Activated B cell treated with CpG ODN at 0.5 μM for 24 hours (primary cell): ENCODE measurements at regions of chr6 and their contacts with region 1.

Region 1: GRCh38 chr6:53484476-53485280 is 60.2 kb downstream of the GCLC start:
- DNase-seq: no peak
- ATAC-seq: peak; percentile 66
- H3K4me3 Mint-ChIP-seq: peak overlapping the region; percentile 1
- H3K27ac Mint-ChIP-seq: peak overlapping the region; percentile 79
- H3K4me1 Mint-ChIP-seq: peaks cover 62% of the 10 kb centered on the region
- H3K27me3 Mint-ChIP-seq: peaks cover 3% of the 10 kb centered on the region
- CTCF ChIP-seq: peak; percentile 82

Region 2: DNA sequence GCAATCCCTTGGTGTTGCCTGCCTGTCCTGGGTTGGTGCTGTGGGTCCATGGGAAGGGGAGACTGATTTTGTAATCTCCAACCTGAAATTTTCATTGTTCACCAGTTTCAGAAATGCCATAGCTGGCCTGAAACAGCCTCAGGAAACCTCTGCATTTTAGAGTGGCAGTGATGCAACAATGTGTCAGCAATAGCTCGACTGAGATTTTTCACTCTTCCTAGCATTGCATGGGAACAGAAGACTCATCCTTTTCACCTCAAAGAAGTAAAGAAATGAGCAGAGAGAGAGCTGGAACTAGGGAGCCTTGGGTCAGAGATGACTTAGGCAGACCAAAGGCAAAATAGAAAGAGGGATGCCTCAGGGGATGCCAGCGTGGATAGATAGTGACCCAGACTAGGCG is 837.5 kb before region 1 on chr6:
- CTCF ChIA-PET with region 1: no interaction called
- POLR2A ChIA-PET with region 1: no interaction called
- intact Hi-C with region 1: loop called (anchors 1 kb)
- DNase-seq: no peak
- ATAC-seq: no peak
- H3K4me3 Mint-ChIP-seq: no peak overlapping the region
- H3K27ac Mint-ChIP-seq: no peak overlapping the region
- H3K4me1 Mint-ChIP-seq: peaks cover 6% of the 10 kb centered on the region
- H3K27me3 Mint-ChIP-seq: peaks cover 15% of the 10 kb centered on the region
- CTCF ChIP-seq: no peak

Region 3: GRCh38 chr6:52881996-52882841 is 602.5 kb before region 1 on chr6:
- CTCF ChIA-PET with region 1: no interaction called
- POLR2A ChIA-PET with region 1: no interaction called
- intact Hi-C with region 1: loop called (anchors 1 kb)
- DNase-seq: peak; percentile 31
- ATAC-seq: peak; percentile 98
- H3K4me3 Mint-ChIP-seq: peak overlapping the region; percentile 82
- H3K27ac Mint-ChIP-seq: peak overlapping the region; percentile 20
- H3K4me1 Mint-ChIP-seq: peaks cover 2% of the 10 kb centered on the region
- H3K27me3 Mint-ChIP-seq: no peaks in the 10 kb centered on the region
- CTCF ChIP-seq: peak; percentile 75

Region 4: GRCh38 chr6:52953911-52954839 is 530.5 kb before region 1 on chr6:
- CTCF ChIA-PET with region 1: no interaction called
- POLR2A ChIA-PET with region 1: no interaction called
- intact Hi-C with region 1: no loop called
- DNase-seq: no peak
- ATAC-seq: no peak
- H3K4me3 Mint-ChIP-seq: no peak overlapping the region
- H3K27ac Mint-ChIP-seq: no peak overlapping the region
- H3K4me1 Mint-ChIP-seq: no peaks in the 10 kb centered on the region
- H3K27me3 Mint-ChIP-seq: peaks cover 4% of the 10 kb centered on the region
- CTCF ChIP-seq: no peak

Region 5: GRCh38 chr6:53103992-53104675 is 380.5 kb before region 1 on chr6:
- CTCF ChIA-PET with region 1: interaction called, 4 read pairs
- POLR2A ChIA-PET with region 1: no interaction called
- intact Hi-C with region 1: loop called (anchors 1 kb)
- DNase-seq: no peak
- ATAC-seq: peak; percentile 28
- H3K4me3 Mint-ChIP-seq: no peak overlapping the region
- H3K27ac Mint-ChIP-seq: no peak overlapping the region
- H3K4me1 Mint-ChIP-seq: no peaks in the 10 kb centered on the region
- H3K27me3 Mint-ChIP-seq: no peaks in the 10 kb centered on the region
- CTCF ChIP-seq: no peak

Region 6: GRCh38 chr6:53273370-53273769 is 211.3 kb before region 1 on chr6:
- CTCF ChIA-PET with region 1: interaction called, 3 read pairs
- POLR2A ChIA-PET with region 1: interaction called, 10 read pairs
- intact Hi-C with region 1: no loop called
- DNase-seq: no peak
- ATAC-seq: no peak
- H3K4me3 Mint-ChIP-seq: no peak overlapping the region
- H3K27ac Mint-ChIP-seq: no peak overlapping the region
- H3K4me1 Mint-ChIP-seq: peaks cover 38% of the 10 kb centered on the region
- H3K27me3 Mint-ChIP-seq: no peaks in the 10 kb centered on the region
- CTCF ChIP-seq: no peak

Region 7: GRCh38 chr6:53359072-53359842 is 125.4 kb before region 1 on chr6:
- CTCF ChIA-PET with region 1: no interaction called
- POLR2A ChIA-PET with region 1: interaction called, 6 read pairs
- intact Hi-C with region 1: loop called (anchors 1 kb)
- DNase-seq: peak; percentile 91
- ATAC-seq: peak; percentile 92
- H3K4me3 Mint-ChIP-seq: peak overlapping the region; percentile 92
- H3K27ac Mint-ChIP-seq: peak overlapping the region; percentile 99
- H3K4me1 Mint-ChIP-seq: peaks cover 59% of the 10 kb centered on the region
- H3K27me3 Mint-ChIP-seq: no peaks in the 10 kb centered on the region
- CTCF ChIP-seq: no peak

Region 8: GRCh38 chr6:53461041-53461656 is 23.5 kb before region 1 on chr6:
- CTCF ChIA-PET with region 1: interaction called, 12 read pairs
- POLR2A ChIA-PET with region 1: interaction called, 11 read pairs
- intact Hi-C with region 1: loop called (anchors 1 kb)
- DNase-seq: no peak
- ATAC-seq: peak; percentile 72
- H3K4me3 Mint-ChIP-seq: peak overlapping the region; percentile 72
- H3K27ac Mint-ChIP-seq: peak overlapping the region; percentile 96
- H3K4me1 Mint-ChIP-seq: peaks cover 94% of the 10 kb centered on the region
- H3K27me3 Mint-ChIP-seq: no peaks in the 10 kb centered on the region
- CTCF ChIP-seq: no peak